Left cardiac atrium (tissue), 4 donors: ENCODE measurements at regions of chr9 and their contacts with region 1.

Region 1: GRCh38 chr9:126398403-126399058 is 71.9 kb downstream of the MVB12B start:
- DNase-seq: peak; percentile 78
- ATAC-seq: peak; percentile 91 to 94

Region 2: GRCh38 chr9:126301985-126302603 is 96.4 kb before region 1 on chr9:
- intact Hi-C with region 1: loop called (anchors 1 to 5 kb)
- DNase-seq: peak; percentile 55
- ATAC-seq: peak; percentile 68 to 75

Region 3: DNA sequence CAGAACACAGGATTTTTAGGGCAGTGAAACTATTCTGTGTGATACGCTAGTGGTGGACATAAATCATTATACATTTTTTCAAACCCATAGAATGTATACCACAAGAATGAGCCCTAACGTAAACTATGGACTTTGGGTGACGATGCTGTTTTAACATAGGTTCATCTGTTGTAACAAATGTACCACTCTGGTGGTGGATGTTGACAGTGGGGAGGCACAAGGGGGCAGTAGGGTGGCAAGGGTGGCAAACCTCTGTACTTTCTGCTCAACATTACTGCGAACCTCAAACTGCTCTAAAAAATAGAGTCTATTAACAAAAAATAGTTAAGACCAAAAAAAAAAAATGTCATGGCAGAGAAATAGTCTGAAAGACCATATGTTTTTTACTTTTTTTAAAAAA is 81.0 kb before region 1 on chr9:
- intact Hi-C with region 1: loop called in 1 of 2 experiments (anchors 5 kb)
- DNase-seq: no peak
- ATAC-seq: peak; percentile 27 to 43